ENCODE measurements at regions of chr1 and their contacts with region 1.

Region 1: GRCh38 chr1:64675718-64676345 is 69.0 kb upstream of the RAVER2 start:
- DNase-seq: no peak
- H3K4me3 ChIP-seq: no peak overlapping the region
- H3K27ac ChIP-seq: no peak overlapping the region
- H3K4me1 ChIP-seq: no peaks in the 10 kb centered on the region
- H3K27me3 ChIP-seq: no peaks in the 10 kb centered on the region
- CTCF ChIP-seq: peak; percentile 59

Region 2: DNA sequence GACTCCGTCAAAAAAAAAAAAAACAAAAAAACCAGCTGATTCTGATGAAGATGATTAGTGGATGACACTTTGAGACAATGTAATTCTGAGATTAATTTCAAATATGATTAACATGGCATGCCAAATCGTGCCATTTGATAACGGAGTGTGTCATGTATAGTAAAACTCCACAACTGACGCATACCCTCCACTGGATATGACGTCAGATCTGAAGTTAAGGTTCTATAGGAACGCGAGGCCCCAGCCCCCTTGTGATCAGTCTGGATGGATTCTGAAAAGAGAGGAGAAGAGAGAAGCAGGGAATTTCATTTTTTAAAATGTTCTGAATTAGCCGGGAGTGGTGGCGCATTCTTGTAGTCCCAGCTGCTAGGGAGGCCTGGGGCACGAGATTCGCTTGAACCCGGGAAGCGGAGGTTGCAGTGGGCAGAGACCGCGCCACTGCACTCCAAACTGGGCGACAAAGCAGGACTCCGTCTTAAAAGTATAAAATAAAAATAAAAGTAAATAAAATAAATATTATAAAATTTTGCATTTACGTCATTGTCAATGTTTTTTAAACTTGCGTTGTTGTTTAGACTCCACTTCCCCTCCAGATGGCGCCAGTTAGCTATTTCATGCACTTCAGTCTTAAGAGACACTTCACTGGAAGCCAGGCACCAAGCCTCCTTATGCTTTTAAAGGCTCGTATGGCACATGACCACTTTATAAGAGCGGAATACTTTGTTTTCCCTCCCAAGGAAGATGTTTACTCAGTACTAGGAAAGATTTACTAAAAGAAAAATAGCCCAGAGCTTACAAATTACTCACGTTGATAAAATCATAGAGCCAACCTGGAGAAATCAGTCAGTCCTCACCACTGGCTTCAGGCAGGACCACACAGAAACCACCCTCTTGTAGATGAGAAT is 406.9 kb before region 1 on chr1:
- intact Hi-C with region 1: loop called (anchors 2 kb)
- DNase-seq: peak; percentile 81
- H3K4me3 ChIP-seq: no peak overlapping the region
- H3K27ac ChIP-seq: no peak overlapping the region
- H3K4me1 ChIP-seq: no peaks in the 10 kb centered on the region
- H3K27me3 ChIP-seq: no peaks in the 10 kb centered on the region
- CTCF ChIP-seq: peak; percentile 60

Region 3: GRCh38 chr1:64499966-64500365 is 175.9 kb before region 1 on chr1:
- intact Hi-C with region 1: loop called (anchors 10 kb)
- DNase-seq: no peak
- H3K4me3 ChIP-seq: no peak overlapping the region
- H3K27ac ChIP-seq: no peak overlapping the region
- H3K4me1 ChIP-seq: no peaks in the 10 kb centered on the region
- H3K27me3 ChIP-seq: no peaks in the 10 kb centered on the region
- CTCF ChIP-seq: no peak

Region 4: GRCh38 chr1:64543831-64544230 is 132.0 kb before region 1 on chr1:
- intact Hi-C with region 1: no loop called
- DNase-seq: no peak
- H3K4me3 ChIP-seq: no peak overlapping the region
- H3K27ac ChIP-seq: no peak overlapping the region
- H3K4me1 ChIP-seq: no peaks in the 10 kb centered on the region
- H3K27me3 ChIP-seq: no peaks in the 10 kb centered on the region
- CTCF ChIP-seq: no peak